Activated CD4-positive, alpha-beta memory T cell treated with anti-CD3 and anti-CD28 coated beads for 36 hours (primary cell): ENCODE measurements at regions of chr7 and their contacts with region 1.

Region 1: DNA sequence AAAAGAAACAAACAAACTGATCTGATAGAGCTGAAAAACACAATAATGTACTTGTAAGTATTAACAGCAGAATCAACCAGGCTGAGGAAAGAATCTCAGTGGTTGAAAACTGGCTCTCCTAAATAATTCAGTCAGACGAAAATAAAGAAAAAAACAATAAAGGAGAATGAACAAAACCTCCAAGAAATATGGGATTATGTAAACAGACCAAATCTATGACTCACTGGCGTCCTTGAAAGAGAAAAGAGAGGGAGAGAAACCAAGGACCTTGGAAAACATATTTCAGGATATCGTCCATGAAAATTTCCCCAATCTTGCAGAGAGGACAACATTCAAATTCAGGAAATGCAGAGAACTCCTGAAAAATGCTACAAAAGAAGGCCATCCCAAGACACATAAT is 62.9 kb downstream of the FBXL13 start:
- DNase-seq: no peak
- H3K4me3 Mint-ChIP-seq: no peak overlapping the region
- H3K27ac Mint-ChIP-seq: no peak overlapping the region
- H3K4me1 Mint-ChIP-seq: no peaks in the 10 kb centered on the region
- H3K27me3 Mint-ChIP-seq: no peaks in the 10 kb centered on the region

Region 2: GRCh38 chr7:102967798-102968197 is 43.9 kb before region 1 on chr7:
- CTCF ChIA-PET with region 1: no interaction called
- POLR2A ChIA-PET with region 1: no interaction called
- intact Hi-C with region 1: loop called (anchors 5 kb)
- DNase-seq: no peak
- H3K4me3 Mint-ChIP-seq: no peak overlapping the region
- H3K27ac Mint-ChIP-seq: no peak overlapping the region
- H3K4me1 Mint-ChIP-seq: no peaks in the 10 kb centered on the region
- H3K27me3 Mint-ChIP-seq: no peaks in the 10 kb centered on the region

Region 3: GRCh38 chr7:102994567-102994966 is 17.1 kb before region 1 on chr7:
- CTCF ChIA-PET with region 1: no interaction called
- POLR2A ChIA-PET with region 1: no interaction called
- intact Hi-C with region 1: no loop called
- DNase-seq: no peak
- H3K4me3 Mint-ChIP-seq: no peak overlapping the region
- H3K27ac Mint-ChIP-seq: no peak overlapping the region
- H3K4me1 Mint-ChIP-seq: peaks cover 4% of the 10 kb centered on the region
- H3K27me3 Mint-ChIP-seq: no peaks in the 10 kb centered on the region